Naive thymus-derived CD4-positive, alpha-beta T cell (primary cell): ENCODE measurements at regions of chr9 and their contacts with region 1.

Region 1: DNA sequence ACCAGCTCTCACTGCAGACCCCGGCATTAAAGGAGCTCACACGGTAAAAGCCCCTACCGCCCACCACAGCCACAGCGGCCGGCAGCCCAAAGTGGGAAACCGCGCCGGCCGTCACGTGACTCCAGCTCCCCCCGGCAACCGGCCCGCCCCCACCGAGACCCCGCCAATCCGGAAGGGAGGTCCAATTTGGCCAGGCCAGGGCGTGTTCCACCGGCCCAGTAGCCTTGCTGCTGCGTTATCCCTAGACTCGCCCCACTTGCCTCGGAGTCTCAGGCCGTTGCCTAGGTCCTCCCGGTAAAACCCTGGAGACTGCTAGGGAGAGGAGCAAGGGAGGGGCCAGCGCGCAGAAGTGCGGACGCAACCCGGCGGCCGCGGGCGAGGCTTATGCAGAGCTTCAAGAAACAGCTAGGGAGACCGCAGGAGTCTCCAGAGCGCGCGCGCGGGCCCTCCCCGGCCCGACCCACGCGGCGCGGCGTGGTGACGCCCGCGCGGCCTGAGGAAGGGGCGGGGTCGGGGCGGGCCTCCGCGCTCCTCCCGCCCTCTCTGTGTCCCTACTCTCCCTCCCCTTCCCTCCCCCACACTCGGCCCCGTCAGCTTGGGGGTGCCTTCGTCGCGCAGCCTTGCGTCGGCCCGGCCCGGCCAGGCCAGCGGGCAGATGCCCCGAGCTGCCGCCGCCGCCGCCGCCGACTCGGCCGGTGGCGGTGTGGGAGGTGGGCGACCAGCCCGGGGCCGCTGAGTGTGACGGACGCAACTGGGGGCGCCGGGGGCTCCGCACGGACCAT is at the start of gene RIC1:
- DNase-seq: peak; percentile 85 to 91 (median 88)
- ATAC-seq: peak; percentile 94
- H3K4me3 ChIP-seq: peak within 1 kb of the TSS; percentile 88
- H3K4me3 Mint-ChIP-seq: peak within 1 kb of the TSS; percentile 94 to 100 (median 99)
- H3K27ac ChIP-seq: peak within 1 kb of the TSS; percentile 89
- H3K27ac Mint-ChIP-seq: peak within 1 kb of the TSS; percentile 94 to 99 (median 98)
- H3K4me1 ChIP-seq: peaks cover 10 to 49% of the 10 kb centered on the region in 2 donors
- H3K4me1 Mint-ChIP-seq: peaks cover 43 to 77% (median 65%) of the 10 kb centered on the region in 7 donors
- H3K27me3 ChIP-seq: no peaks in the 10 kb centered on the region
- H3K27me3 Mint-ChIP-seq: no peaks in the 10 kb centered on the region
- total RNA-seq, gene RIC1: 20.2 to 28.2 (median 25.9) TPM

Region 2: GRCh38 chr9:4662108-4662988 is 966.4 kb before region 1 on chr9 and contains the start of gene PLPP6:
- CTCF ChIA-PET with region 1: no interaction called
- POLR2A ChIA-PET with region 1: interaction called, 3 read pairs
- intact Hi-C with region 1: loop called in 1 of 2 experiments (anchors 5 kb)
- DNase-seq: peak; percentile 55 to 81 (median 76)
- ATAC-seq: peak; percentile 86
- H3K4me3 ChIP-seq: peak within 1 kb of the TSS; percentile 63
- H3K4me3 Mint-ChIP-seq: peak within 1 kb of the TSS; percentile 89 to 98 (median 96)
- H3K27ac ChIP-seq: peak within 1 kb of the TSS; percentile 78
- H3K27ac Mint-ChIP-seq: peak within 1 kb of the TSS; percentile 85 to 98 (median 95)
- H3K4me1 ChIP-seq: peaks cover 21 to 50% of the 10 kb centered on the region in 2 donors
- H3K4me1 Mint-ChIP-seq: peaks cover 41 to 80% (median 64%) of the 10 kb centered on the region in 7 donors
- H3K27me3 ChIP-seq: no peaks in the 10 kb centered on the region
- H3K27me3 Mint-ChIP-seq: peaks cover 0 to 12% (median 0%) of the 10 kb centered on the region in 5 donors
- total RNA-seq, gene PLPP6: 7.4 to 24.1 (median 10.2) TPM

Region 3: GRCh38 chr9:4984621-4985385 is 643.9 kb before region 1 on chr9 and contains the start of gene JAK2:
- CTCF ChIA-PET with region 1: no interaction called
- POLR2A ChIA-PET with region 1: interaction called, 9 read pairs
- intact Hi-C with region 1: loop called (anchors 2 kb)
- DNase-seq: peak; percentile 62 to 85 (median 72)
- ATAC-seq: peak; percentile 87
- H3K4me3 ChIP-seq: peak within 1 kb of the TSS; percentile 52
- H3K4me3 Mint-ChIP-seq: peak within 1 kb of the TSS; percentile 83 to 98 (median 94)
- H3K27ac ChIP-seq: peak within 1 kb of the TSS; percentile 78
- H3K27ac Mint-ChIP-seq: peak within 1 kb of the TSS; percentile 80 to 94 (median 90)
- H3K4me1 ChIP-seq: peaks cover 20 to 32% of the 10 kb centered on the region in 2 donors
- H3K4me1 Mint-ChIP-seq: peaks cover 20 to 41% (median 26%) of the 10 kb centered on the region in 7 donors
- H3K27me3 ChIP-seq: no peaks in the 10 kb centered on the region
- H3K27me3 Mint-ChIP-seq: no peaks in the 10 kb centered on the region
- total RNA-seq, gene JAK2: 11.7 to 76.0 (median 17.5) TPM

Region 4: GRCh38 chr9:5557606-5558587 is 70.8 kb before region 1 on chr9:
- CTCF ChIA-PET with region 1: interaction called, 5 read pairs
- POLR2A ChIA-PET with region 1: interaction called, 15 read pairs
- intact Hi-C with region 1: no loop called
- DNase-seq: peak; percentile 20 to 73 (median 61)
- ATAC-seq: peak; percentile 97
- H3K4me3 ChIP-seq: peak overlapping the region; percentile 24
- H3K4me3 Mint-ChIP-seq: peak overlapping the region; percentile 58 to 79 (median 68)
- H3K27ac ChIP-seq: peak overlapping the region; percentile 68
- H3K27ac Mint-ChIP-seq: peak overlapping the region; percentile 87 to 98 (median 94)
- H3K4me1 ChIP-seq: peaks cover 24 to 31% of the 10 kb centered on the region in 2 donors
- H3K4me1 Mint-ChIP-seq: peaks cover 32 to 59% (median 53%) of the 10 kb centered on the region in 7 donors
- H3K27me3 ChIP-seq: no peaks in the 10 kb centered on the region
- H3K27me3 Mint-ChIP-seq: no peaks in the 10 kb centered on the region

Region 5: DNA sequence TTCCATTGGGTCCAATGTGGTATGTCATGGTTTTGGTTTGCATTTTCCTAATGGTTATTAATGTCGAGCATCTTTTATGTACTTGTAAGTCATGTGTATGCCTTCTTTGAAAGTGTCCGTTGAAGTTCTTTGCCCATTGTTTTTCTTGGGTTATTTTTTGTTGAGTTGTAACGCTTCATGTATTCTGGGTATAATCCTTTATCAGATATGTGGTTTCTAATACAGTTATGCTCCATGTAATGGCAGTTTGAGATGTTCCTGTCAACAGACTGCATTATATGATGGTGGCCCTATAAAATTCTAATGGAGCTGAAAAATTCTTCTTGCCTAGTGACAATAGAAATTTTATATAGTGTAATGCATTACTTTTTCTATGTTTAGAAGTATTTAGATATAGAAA is 17.4 kb after region 1 on chr9:
- CTCF ChIA-PET with region 1: no interaction called
- POLR2A ChIA-PET with region 1: interaction called, 4 read pairs
- intact Hi-C with region 1: loop called in 1 of 2 experiments (anchors 2 kb)
- DNase-seq: no peak
- ATAC-seq: no peak
- H3K4me3 ChIP-seq: no peak overlapping the region
- H3K4me3 Mint-ChIP-seq: peak overlapping the region in 1 of 10 donors; percentile 8
- H3K27ac ChIP-seq: no peak overlapping the region
- H3K27ac Mint-ChIP-seq: no peak overlapping the region
- H3K4me1 ChIP-seq: peaks cover 0 to 5% of the 10 kb centered on the region in 2 donors
- H3K4me1 Mint-ChIP-seq: peaks cover 24 to 67% (median 51%) of the 10 kb centered on the region in 7 donors
- H3K27me3 ChIP-seq: no peaks in the 10 kb centered on the region
- H3K27me3 Mint-ChIP-seq: no peaks in the 10 kb centered on the region

Region 6: DNA sequence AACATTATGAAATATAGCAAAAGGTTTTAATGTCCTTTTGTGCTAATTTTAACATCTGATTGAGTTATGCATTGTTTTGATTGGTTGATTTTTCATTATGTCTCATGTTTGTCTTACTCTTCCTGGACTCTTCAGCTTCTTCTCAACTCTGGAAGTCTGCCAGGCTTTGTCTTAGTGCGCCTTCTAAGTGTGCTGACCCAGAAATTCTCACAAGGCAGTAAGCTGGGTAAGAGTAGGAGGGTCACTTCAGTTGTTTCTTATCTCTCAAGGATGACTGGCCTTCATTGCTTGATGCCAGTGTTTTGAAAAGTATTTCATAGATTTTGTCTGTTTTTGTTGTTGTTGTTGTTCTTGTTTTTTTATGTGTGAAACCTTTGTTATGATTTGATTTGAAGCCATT is 59.4 kb after region 1 on chr9:
- CTCF ChIA-PET with region 1: no interaction called
- POLR2A ChIA-PET with region 1: no interaction called
- intact Hi-C with region 1: no loop called
- DNase-seq: no peak
- ATAC-seq: no peak
- H3K4me3 ChIP-seq: no peak overlapping the region
- H3K4me3 Mint-ChIP-seq: peak overlapping the region in 1 of 10 donors; percentile 7
- H3K27ac ChIP-seq: no peak overlapping the region
- H3K27ac Mint-ChIP-seq: peak overlapping the region in 2 of 9 donors; percentile 3 to 50
- H3K4me1 ChIP-seq: no peaks in the 10 kb centered on the region
- H3K4me1 Mint-ChIP-seq: peaks cover 0 to 30% (median 24%) of the 10 kb centered on the region in 7 donors
- H3K27me3 ChIP-seq: no peaks in the 10 kb centered on the region
- H3K27me3 Mint-ChIP-seq: no peaks in the 10 kb centered on the region

Region 7: GRCh38 chr9:5735072-5735471 is 106.4 kb after region 1 on chr9:
- CTCF ChIA-PET with region 1: no interaction called
- POLR2A ChIA-PET with region 1: no interaction called
- intact Hi-C with region 1: loop called in 1 of 2 experiments (anchors 5 kb)
- DNase-seq: no peak
- ATAC-seq: no peak
- H3K4me3 ChIP-seq: no peak overlapping the region
- H3K4me3 Mint-ChIP-seq: no peak overlapping the region
- H3K27ac ChIP-seq: no peak overlapping the region
- H3K27ac Mint-ChIP-seq: no peak overlapping the region
- H3K4me1 ChIP-seq: no peaks in the 10 kb centered on the region
- H3K4me1 Mint-ChIP-seq: peaks cover 0 to 4% (median 0%) of the 10 kb centered on the region in 7 donors
- H3K27me3 ChIP-seq: no peaks in the 10 kb centered on the region
- H3K27me3 Mint-ChIP-seq: no peaks in the 10 kb centered on the region

Region 8: GRCh38 chr9:5813836-5814235 is 185.1 kb after region 1 on chr9:
- CTCF ChIA-PET with region 1: no interaction called
- POLR2A ChIA-PET with region 1: no interaction called
- intact Hi-C with region 1: no loop called
- DNase-seq: no peak
- ATAC-seq: no peak
- H3K4me3 ChIP-seq: no peak overlapping the region
- H3K4me3 Mint-ChIP-seq: no peak overlapping the region
- H3K27ac ChIP-seq: no peak overlapping the region
- H3K27ac Mint-ChIP-seq: no peak overlapping the region
- H3K4me1 ChIP-seq: no peaks in the 10 kb centered on the region
- H3K4me1 Mint-ChIP-seq: peaks cover 7 to 16% (median 11%) of the 10 kb centered on the region in 7 donors
- H3K27me3 ChIP-seq: no peaks in the 10 kb centered on the region
- H3K27me3 Mint-ChIP-seq: no peaks in the 10 kb centered on the region

Region 9: GRCh38 chr9:6068983-6069382 is 440.3 kb after region 1 on chr9:
- CTCF ChIA-PET with region 1: no interaction called
- POLR2A ChIA-PET with region 1: no interaction called
- intact Hi-C with region 1: loop called in 1 of 2 experiments (anchors 5 kb)
- DNase-seq: peak in 7 of 9 donors; percentile 30 to 73 (median 63)
- ATAC-seq: peak; percentile 97
- H3K4me3 ChIP-seq: peak overlapping the region; percentile 16
- H3K4me3 Mint-ChIP-seq: peak overlapping the region; percentile 54 to 77 (median 72)
- H3K27ac ChIP-seq: peak overlapping the region; percentile 48
- H3K27ac Mint-ChIP-seq: peak overlapping the region; percentile 86 to 96 (median 93)
- H3K4me1 ChIP-seq: peaks cover 8 to 21% of the 10 kb centered on the region in 2 donors
- H3K4me1 Mint-ChIP-seq: peaks cover 17 to 28% (median 27%) of the 10 kb centered on the region in 7 donors
- H3K27me3 ChIP-seq: no peaks in the 10 kb centered on the region
- H3K27me3 Mint-ChIP-seq: no peaks in the 10 kb centered on the region